ENCODE measurements at regions of chr3 and their contacts with region 1.

Region 1: GRCh38 chr3:148955544-148956346 is 35.6 kb upstream of the GYG1 start:
- DNase-seq: peak in 15 of 35 experiments; percentile 5 to 62 (median 17)
- ATAC-seq: no peak
- H3K4me3 ChIP-seq: no peak overlapping the region
- H3K4me3 Mint-ChIP-seq: no peak overlapping the region
- H3K27ac ChIP-seq: no peak overlapping the region
- H3K27ac Mint-ChIP-seq: no peak overlapping the region
- H3K4me1 ChIP-seq: peaks cover 0 to 3% of the 10 kb centered on the region in 2 experiments
- H3K4me1 Mint-ChIP-seq: peaks cover 5 to 9% (median 7%) of the 10 kb centered on the region in 3 donors
- H3K27me3 ChIP-seq: peaks cover 0 to 2% of the 10 kb centered on the region in 2 experiments
- H3K27me3 Mint-ChIP-seq: peaks cover 0 to 5% of the 10 kb centered on the region in 2 donors

Region 2: GRCh38 chr3:148943506-148944205 is 12.1 kb before region 1 on chr3:
- CTCF ChIA-PET with region 1: interaction called, 5 to 10 read pairs
- POLR2A ChIA-PET with region 1: no interaction called
- DNase-seq: peak in 2 of 35 experiments; percentile 4 to 57
- ATAC-seq: peak; percentile 63 to 88 (median 77)
- H3K4me3 ChIP-seq: no peak overlapping the region
- H3K4me3 Mint-ChIP-seq: no peak overlapping the region
- H3K27ac ChIP-seq: no peak overlapping the region
- H3K27ac Mint-ChIP-seq: no peak overlapping the region
- H3K4me1 ChIP-seq: no peaks in the 10 kb centered on the region
- H3K4me1 Mint-ChIP-seq: no peaks in the 10 kb centered on the region
- H3K27me3 ChIP-seq: peaks cover 0 to 3% of the 10 kb centered on the region in 2 experiments
- H3K27me3 Mint-ChIP-seq: peaks cover 0 to 6% of the 10 kb centered on the region in 2 donors

Region 3: GRCh38 chr3:149120051-149120972 is 164.6 kb after region 1 on chr3:
- CTCF ChIA-PET with region 1: interaction called, 4 to 21 read pairs
- POLR2A ChIA-PET with region 1: no interaction called
- DNase-seq: peak in 9 of 35 experiments; percentile 2 to 80 (median 11)
- ATAC-seq: peak; percentile 67 to 78 (median 74)
- H3K4me3 ChIP-seq: no peak overlapping the region
- H3K4me3 Mint-ChIP-seq: no peak overlapping the region
- H3K27ac ChIP-seq: no peak overlapping the region
- H3K27ac Mint-ChIP-seq: peak overlapping the region in 1 of 2 donors; percentile 34
- H3K4me1 ChIP-seq: no peaks in the 10 kb centered on the region
- H3K4me1 Mint-ChIP-seq: peaks cover 0 to 2% (median 2%) of the 10 kb centered on the region in 3 donors
- H3K27me3 ChIP-seq: peaks cover 0 to 3% of the 10 kb centered on the region in 2 experiments
- H3K27me3 Mint-ChIP-seq: peaks cover 2 to 12% of the 10 kb centered on the region in 2 donors

Region 4: GRCh38 chr3:149129326-149130205 is 173.8 kb after region 1 on chr3 and contains the start of gene HPS3:
- CTCF ChIA-PET with region 1: interaction called, 6 to 16 read pairs
- POLR2A ChIA-PET with region 1: no interaction called
- DNase-seq: peak; percentile 53 to 89 (median 70)
- ATAC-seq: peak; percentile 89 to 93 (median 90)
- H3K4me3 ChIP-seq: peak within 1 kb of the TSS; percentile 97
- H3K4me3 Mint-ChIP-seq: peak within 1 kb of the TSS; percentile 90 to 99 (median 96)
- H3K27ac ChIP-seq: peak within 1 kb of the TSS; percentile 74
- H3K27ac Mint-ChIP-seq: peak within 1 kb of the TSS; percentile 68 to 85
- H3K4me1 ChIP-seq: peaks cover 15 to 17% of the 10 kb centered on the region in 2 experiments
- H3K4me1 Mint-ChIP-seq: peaks cover 48 to 49% (median 48%) of the 10 kb centered on the region in 3 donors
- H3K27me3 ChIP-seq: peaks cover 0 to 4% of the 10 kb centered on the region in 2 experiments
- H3K27me3 Mint-ChIP-seq: peaks cover 4 to 11% of the 10 kb centered on the region in 2 donors
- total RNA-seq, gene HPS3: 18.6 to 28.4 (median 21.5) TPM

Region 5: GRCh38 chr3:149273096-149273751 is 317.5 kb after region 1 on chr3:
- CTCF ChIA-PET with region 1: interaction called, 5 to 11 read pairs
- POLR2A ChIA-PET with region 1: interaction called, 5 to 9 read pairs
- DNase-seq: peak in 11 of 35 experiments; percentile 4 to 82 (median 15)
- ATAC-seq: peak; percentile 50 to 85 (median 58)
- H3K4me3 ChIP-seq: no peak overlapping the region
- H3K4me3 Mint-ChIP-seq: no peak overlapping the region
- H3K27ac ChIP-seq: no peak overlapping the region
- H3K27ac Mint-ChIP-seq: no peak overlapping the region
- H3K4me1 ChIP-seq: peaks cover 6 to 7% of the 10 kb centered on the region in 2 experiments
- H3K4me1 Mint-ChIP-seq: peaks cover 14 to 23% (median 15%) of the 10 kb centered on the region in 3 donors
- H3K27me3 ChIP-seq: no peaks in the 10 kb centered on the region
- H3K27me3 Mint-ChIP-seq: no peaks in the 10 kb centered on the region

Region 6: GRCh38 chr3:149279784-149280183 is 324.0 kb after region 1 on chr3:
- CTCF ChIA-PET with region 1: interaction called, 5 to 11 read pairs
- POLR2A ChIA-PET with region 1: interaction called in 1 of 2 experiments, 15 read pairs
- DNase-seq: no peak
- ATAC-seq: no peak
- H3K4me3 ChIP-seq: no peak overlapping the region
- H3K4me3 Mint-ChIP-seq: no peak overlapping the region
- H3K27ac ChIP-seq: no peak overlapping the region
- H3K27ac Mint-ChIP-seq: no peak overlapping the region
- H3K4me1 ChIP-seq: peaks cover 6 to 7% of the 10 kb centered on the region in 2 experiments
- H3K4me1 Mint-ChIP-seq: peaks cover 14 to 19% (median 15%) of the 10 kb centered on the region in 3 donors
- H3K27me3 ChIP-seq: no peaks in the 10 kb centered on the region
- H3K27me3 Mint-ChIP-seq: no peaks in the 10 kb centered on the region

Measured in T-cell (primary cell).